ENCODE measurements at regions of chr1 and their contacts with region 1.

Region 1: GRCh38 chr1:151198255-151199127 is at the start of gene PIP5K1A:
- DNase-seq: peak; percentile 96 to 100 (median 99)

Region 2: DNA sequence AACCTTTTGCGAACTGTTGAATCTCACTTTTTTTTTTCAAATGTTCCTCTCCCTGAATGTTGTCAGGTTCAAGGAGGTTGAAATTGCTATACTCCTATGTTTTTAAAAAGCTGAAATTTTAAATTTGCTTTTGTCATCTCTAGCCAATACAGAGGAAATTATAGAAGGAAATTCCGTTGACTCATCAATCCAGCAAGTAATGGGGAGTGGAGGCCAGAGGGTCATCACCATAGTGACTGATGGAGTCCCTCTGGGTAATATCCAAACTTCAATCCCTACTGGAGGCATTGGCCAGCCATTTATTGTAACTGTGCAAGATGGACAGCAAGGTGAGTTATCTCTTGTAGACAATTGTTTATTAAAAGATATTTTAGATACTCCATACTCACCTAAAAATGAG is 91.6 kb before region 1 on chr1:
- intact Hi-C with region 1: no loop called
- DNase-seq: no peak

Region 3: DNA sequence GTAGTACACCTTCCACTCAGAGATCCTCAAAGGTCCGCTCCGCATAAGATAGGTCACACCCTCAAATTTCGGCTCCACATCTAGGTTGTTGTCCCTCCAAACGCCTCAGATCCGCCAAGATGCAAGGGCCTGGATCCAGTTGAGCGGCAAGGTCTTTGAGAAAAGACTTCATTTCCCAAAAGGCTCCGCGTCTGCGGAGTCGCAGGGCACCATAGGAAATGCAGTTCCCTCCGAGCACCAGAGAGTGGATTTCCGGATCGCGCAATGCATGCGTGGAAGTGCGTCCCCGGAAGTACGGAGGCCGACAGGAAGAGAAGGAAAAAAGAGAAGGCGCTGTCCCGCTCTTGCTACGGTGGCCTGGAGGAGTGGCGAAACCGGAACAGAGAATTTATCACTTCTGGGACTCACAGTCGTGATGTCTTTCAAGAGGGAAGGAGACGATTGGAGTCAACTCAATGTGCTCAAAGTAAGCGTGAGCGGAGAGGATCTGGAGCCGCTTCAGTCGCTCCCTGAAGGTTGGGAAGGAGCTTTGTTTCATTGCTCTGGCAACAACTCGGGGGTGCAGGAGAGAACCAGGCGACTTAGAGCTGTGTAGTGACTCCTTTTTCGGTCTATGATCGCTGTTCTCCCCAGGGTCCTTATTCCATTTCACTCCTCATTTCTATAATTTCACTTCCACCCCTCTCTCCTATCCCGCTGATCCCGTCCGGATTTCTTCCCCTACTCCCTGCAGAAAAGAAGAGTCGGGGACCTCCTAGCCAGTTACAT is 32.6 kb before region 1 on chr1 and contains the starts of genes LYSMD1 and SCNM1:
- intact Hi-C with region 1: no loop called
- DNase-seq: peak; percentile 94 to 99 (median 97)

Region 4: GRCh38 chr1:151251656-151252470 is 53.4 kb after region 1 on chr1:
- intact Hi-C with region 1: loop called (anchors 1 kb)
- DNase-seq: peak in 7 of 10 donors; percentile 14 to 88 (median 56)

Region 5: GRCh38 chr1:151435160-151435559 is 236.7 kb after region 1 on chr1:
- intact Hi-C with region 1: no loop called
- DNase-seq: no peak

Measured in posterior cingulate gyrus (tissue), 11 donors.